Activated B cell treated with CpG ODN at 0.5 μM for 24 hours (primary cell): ENCODE measurements at regions of chr5 and their contacts with region 1.

Region 1: DNA sequence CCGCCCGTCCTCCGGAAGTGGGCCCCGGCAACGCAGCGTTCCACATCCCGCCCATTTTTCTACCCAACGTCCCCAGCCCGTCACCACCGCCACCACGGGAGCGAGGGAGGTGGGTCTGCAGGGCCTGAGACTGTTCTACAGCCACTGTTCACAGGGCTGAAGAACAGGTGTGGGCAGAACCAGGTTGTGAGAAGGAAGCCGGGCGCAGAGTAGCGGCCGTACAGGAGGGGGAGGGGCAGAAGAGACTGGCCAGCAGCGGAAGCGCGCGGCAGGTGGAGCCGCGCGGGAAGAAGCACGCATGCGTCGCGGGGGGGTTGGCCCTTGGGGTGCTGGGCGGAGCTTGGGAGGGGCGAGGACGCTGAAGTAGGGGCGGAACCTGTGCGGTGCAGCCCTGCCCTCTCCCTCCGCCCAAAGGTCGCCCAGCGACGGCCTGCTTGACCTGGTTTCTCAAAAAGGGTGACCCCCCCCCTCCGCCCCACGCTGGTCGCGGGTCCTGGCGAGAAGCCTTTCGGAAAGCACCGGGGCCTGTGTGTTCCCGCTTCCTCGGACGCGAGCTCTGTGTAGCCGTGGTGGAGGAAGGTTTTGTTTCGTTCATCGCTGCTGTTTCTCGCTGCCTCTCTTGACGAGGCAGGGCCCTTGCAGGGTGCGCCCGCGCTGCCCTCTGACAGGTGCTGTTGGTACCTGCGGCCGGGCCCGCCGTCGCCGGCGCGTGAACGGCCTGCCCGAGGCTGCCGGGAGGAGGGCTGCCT is 7.8 kb upstream of the MGAT1 start:
- DNase-seq: peak; percentile 98
- ATAC-seq: peak; percentile 84
- H3K4me3 Mint-ChIP-seq: peak overlapping the region; percentile 98
- H3K27ac Mint-ChIP-seq: peak overlapping the region; percentile 100
- H3K4me1 Mint-ChIP-seq: peaks cover 76% of the 10 kb centered on the region
- H3K27me3 Mint-ChIP-seq: no peaks in the 10 kb centered on the region
- CTCF ChIP-seq: no peak

Region 2: GRCh38 chr5:180844432-180844831 is 34.0 kb after region 1 on chr5:
- CTCF ChIA-PET with region 1: no interaction called
- POLR2A ChIA-PET with region 1: no interaction called
- intact Hi-C with region 1: no loop called
- DNase-seq: no peak
- ATAC-seq: no peak
- H3K4me3 Mint-ChIP-seq: no peak overlapping the region
- H3K27ac Mint-ChIP-seq: no peak overlapping the region
- H3K4me1 Mint-ChIP-seq: no peaks in the 10 kb centered on the region
- H3K27me3 Mint-ChIP-seq: no peaks in the 10 kb centered on the region
- CTCF ChIP-seq: no peak

Region 3: GRCh38 chr5:181217111-181217802 is 406.9 kb after region 1 on chr5:
- CTCF ChIA-PET with region 1: no interaction called
- POLR2A ChIA-PET with region 1: interaction called, 4 read pairs
- intact Hi-C with region 1: loop called (anchors 1 kb)
- DNase-seq: peak; percentile 61
- ATAC-seq: peak; percentile 23
- H3K4me3 Mint-ChIP-seq: peak overlapping the region; percentile 93
- H3K27ac Mint-ChIP-seq: peak overlapping the region; percentile 96
- H3K4me1 Mint-ChIP-seq: peaks cover 40% of the 10 kb centered on the region
- H3K27me3 Mint-ChIP-seq: peaks cover 7% of the 10 kb centered on the region
- CTCF ChIP-seq: no peak